PC-9 (cell line): ENCODE measurements at regions of chr6 and their contacts with region 1.

Region 1: GRCh38 chr6:74199215-74199915 is 503.4 kb downstream of the CD109 start:
- DNase-seq: no peak
- H3K4me3 ChIP-seq: no peak overlapping the region
- H3K27ac ChIP-seq: no peak overlapping the region
- H3K4me1 ChIP-seq: no peaks in the 10 kb centered on the region
- H3K27me3 ChIP-seq: no peaks in the 10 kb centered on the region
- CTCF ChIP-seq: no peak

Region 2: GRCh38 chr6:73964241-73964854 is 235.0 kb before region 1 on chr6:
- CTCF ChIA-PET with region 1: no interaction called
- POLR2A ChIA-PET with region 1: interaction called, 13 read pairs
- intact Hi-C with region 1: no loop called
- DNase-seq: no peak
- H3K4me3 ChIP-seq: no peak overlapping the region
- H3K27ac ChIP-seq: no peak overlapping the region
- H3K4me1 ChIP-seq: no peaks in the 10 kb centered on the region
- H3K27me3 ChIP-seq: no peaks in the 10 kb centered on the region
- CTCF ChIP-seq: no peak

Region 3: GRCh38 chr6:74170118-74170517 is 29.2 kb before region 1 on chr6:
- CTCF ChIA-PET with region 1: no interaction called
- POLR2A ChIA-PET with region 1: no interaction called
- intact Hi-C with region 1: no loop called
- DNase-seq: no peak
- H3K4me3 ChIP-seq: no peak overlapping the region
- H3K27ac ChIP-seq: no peak overlapping the region
- H3K4me1 ChIP-seq: no peaks in the 10 kb centered on the region
- H3K27me3 ChIP-seq: no peaks in the 10 kb centered on the region
- CTCF ChIP-seq: no peak